Sigmoid colon (tissue), 7 donors: ENCODE measurements at regions of chr1 and their contacts with region 1.

Region 1: DNA sequence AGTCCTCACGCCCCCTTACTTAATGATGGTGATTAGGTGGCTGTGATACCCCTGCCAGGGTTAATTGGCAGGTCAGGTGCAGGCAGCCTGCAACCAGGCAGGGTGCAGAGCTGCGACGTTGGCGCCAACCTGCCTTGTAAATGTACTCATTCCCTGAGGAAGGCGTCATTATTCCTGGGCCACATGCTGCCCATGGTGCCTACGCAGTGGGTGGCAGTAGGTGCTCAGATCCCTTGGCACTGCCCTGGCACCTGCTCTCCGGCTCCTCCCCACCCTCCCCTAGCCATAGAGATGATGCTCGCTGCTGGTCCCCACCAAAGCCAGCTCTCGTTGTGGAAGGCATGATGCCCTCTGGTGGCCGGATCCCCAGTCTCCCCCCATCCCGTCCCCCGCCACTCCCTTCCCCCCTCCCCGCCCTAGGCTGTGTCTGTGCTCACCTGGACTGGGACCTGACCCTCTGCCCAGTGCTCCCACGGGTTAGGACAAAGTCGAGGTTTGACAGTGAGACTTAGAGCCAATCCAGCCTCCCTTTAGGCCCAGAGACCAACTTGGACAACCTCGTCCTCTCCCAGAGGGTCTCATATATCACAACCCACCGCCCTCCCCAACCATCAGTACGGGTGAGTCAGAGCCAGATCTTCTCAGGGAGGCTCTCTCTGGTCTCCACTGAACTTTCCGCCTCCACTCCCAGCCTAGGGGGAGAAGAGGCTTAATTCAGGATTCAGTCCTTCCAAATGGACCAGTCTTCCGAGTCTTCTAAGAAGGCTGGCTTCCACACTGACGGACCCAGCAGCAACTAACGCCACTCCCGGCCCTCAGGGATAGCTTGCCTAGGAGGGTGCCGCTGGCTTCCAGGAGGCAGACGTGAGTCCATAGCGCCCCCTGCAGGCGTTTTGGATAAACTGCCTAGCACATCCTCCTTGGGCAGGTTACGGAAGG is 5.7 kb downstream of the KRTCAP2 start:
- DNase-seq: peak; percentile 94
- H3K4me3 ChIP-seq: peak overlapping the region in 2 of 4 donors; percentile 6 to 12
- H3K27ac ChIP-seq: peak overlapping the region; percentile 40 to 62 (median 48)
- H3K4me1 ChIP-seq: peaks cover 0 to 32% (median 25%) of the 10 kb centered on the region in 4 donors
- H3K27me3 ChIP-seq: peaks cover 0 to 7% (median 0%) of the 10 kb centered on the region in 3 donors
- CTCF ChIP-seq: peak; percentile 87 to 95 (median 93)
- EP300 ChIP-seq: no peak
- POLR2A ChIP-seq: no peak

Region 2: GRCh38 chr1:154936555-154937084 is 230.8 kb before region 1 on chr1 and contains the start of gene PMVK:
- intact Hi-C with region 1: no loop called
- DNase-seq: peak; percentile 99
- H3K4me3 ChIP-seq: peak within 1 kb of the TSS; percentile 66 to 80 (median 70)
- H3K27ac ChIP-seq: peak within 1 kb of the TSS; percentile 90 to 98 (median 96)
- H3K4me1 ChIP-seq: peaks cover 0 to 38% (median 28%) of the 10 kb centered on the region in 4 donors
- H3K27me3 ChIP-seq: no peaks in the 10 kb centered on the region
- CTCF ChIP-seq: peak in 3 of 4 experiments; percentile 16 to 29 (median 28)
- EP300 ChIP-seq: no peak
- POLR2A ChIP-seq: peak; percentile 51 to 54
- total RNA-seq, gene PMVK: 11.1 to 19.6 (median 13.7) TPM

Region 3: GRCh38 chr1:155127105-155127964 is 40.1 kb before region 1 on chr1 and contains the start of gene EFNA1:
- intact Hi-C with region 1: loop called (anchors 5 kb)
- DNase-seq: peak; percentile 80
- H3K4me3 ChIP-seq: peak within 1 kb of the TSS; percentile 62 to 65 (median 64)
- H3K27ac ChIP-seq: peak within 1 kb of the TSS; percentile 87 to 99 (median 98)
- H3K4me1 ChIP-seq: peaks cover 0 to 61% (median 47%) of the 10 kb centered on the region in 4 donors
- H3K27me3 ChIP-seq: no peaks in the 10 kb centered on the region
- CTCF ChIP-seq: no peak
- EP300 ChIP-seq: peak in 1 of 4 donors; percentile 26
- POLR2A ChIP-seq: peak; percentile 16 to 83
- total RNA-seq, gene EFNA1: 15.5 to 22.5 (median 16.4) TPM

Region 4: GRCh38 chr1:156076501-156077429 is 909.3 kb after region 1 on chr1:
- intact Hi-C with region 1: no loop called
- DNase-seq: peak; percentile 78
- H3K4me3 ChIP-seq: peak overlapping the region; percentile 48 to 71 (median 58)
- H3K27ac ChIP-seq: peak overlapping the region; percentile 57 to 73 (median 61)
- H3K4me1 ChIP-seq: peaks cover 0 to 24% (median 18%) of the 10 kb centered on the region in 4 donors
- H3K27me3 ChIP-seq: peaks cover 0 to 4% (median 0%) of the 10 kb centered on the region in 3 donors
- CTCF ChIP-seq: no peak
- EP300 ChIP-seq: no peak
- POLR2A ChIP-seq: peak; percentile 30 to 38